Caco-2 (cell line): ENCODE measurements at regions of chr11 and their contacts with region 1.

Region 1: GRCh38 chr11:78645226-78646202 is 70.8 kb upstream of the NARS2 start:
- DNase-seq: peak; percentile 82 to 90
- H3K4me3 ChIP-seq: no peak overlapping the region
- H3K4me3 Mint-ChIP-seq: no peak overlapping the region
- H3K27ac Mint-ChIP-seq: no peak overlapping the region
- H3K4me1 ChIP-seq: no peaks in the 10 kb centered on the region
- H3K4me1 Mint-ChIP-seq: no peaks in the 10 kb centered on the region
- H3K27me3 ChIP-seq: no peaks in the 10 kb centered on the region
- H3K27me3 Mint-ChIP-seq: peaks cover 11% of the 10 kb centered on the region
- CTCF ChIP-seq: peak; percentile 98 to 99

Region 2: DNA sequence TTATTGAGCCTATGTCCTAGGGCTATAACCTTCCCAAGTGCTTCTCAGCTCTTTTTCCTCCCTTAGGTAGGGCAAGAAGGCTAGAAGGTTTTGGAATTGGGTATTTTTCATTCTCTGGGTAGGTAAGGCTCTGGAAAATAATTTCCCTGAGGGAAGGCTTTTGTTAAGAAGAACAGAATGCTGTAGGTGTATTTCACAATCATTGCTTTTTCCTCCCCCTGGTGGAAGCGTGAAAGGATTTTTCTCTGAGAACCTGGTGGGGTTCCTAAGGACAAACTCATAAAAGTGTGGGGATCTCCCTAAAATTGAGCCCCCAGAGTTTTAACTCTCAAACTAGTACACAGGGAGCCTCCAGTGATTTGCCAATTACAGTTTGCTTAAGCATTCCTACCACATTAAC is 29.8 kb before region 1 on chr11:
- CTCF ChIA-PET with region 1: no interaction called
- POLR2A ChIA-PET with region 1: no interaction called
- intact Hi-C with region 1: no loop called
- DNase-seq: peak in 1 of 2 experiments; percentile 25
- H3K4me3 ChIP-seq: no peak overlapping the region
- H3K4me3 Mint-ChIP-seq: no peak overlapping the region
- H3K27ac Mint-ChIP-seq: no peak overlapping the region
- H3K4me1 ChIP-seq: peaks cover 9% of the 10 kb centered on the region
- H3K4me1 Mint-ChIP-seq: peaks cover 14% of the 10 kb centered on the region
- H3K27me3 ChIP-seq: no peaks in the 10 kb centered on the region
- H3K27me3 Mint-ChIP-seq: no peaks in the 10 kb centered on the region
- CTCF ChIP-seq: peak; percentile 43

Region 3: DNA sequence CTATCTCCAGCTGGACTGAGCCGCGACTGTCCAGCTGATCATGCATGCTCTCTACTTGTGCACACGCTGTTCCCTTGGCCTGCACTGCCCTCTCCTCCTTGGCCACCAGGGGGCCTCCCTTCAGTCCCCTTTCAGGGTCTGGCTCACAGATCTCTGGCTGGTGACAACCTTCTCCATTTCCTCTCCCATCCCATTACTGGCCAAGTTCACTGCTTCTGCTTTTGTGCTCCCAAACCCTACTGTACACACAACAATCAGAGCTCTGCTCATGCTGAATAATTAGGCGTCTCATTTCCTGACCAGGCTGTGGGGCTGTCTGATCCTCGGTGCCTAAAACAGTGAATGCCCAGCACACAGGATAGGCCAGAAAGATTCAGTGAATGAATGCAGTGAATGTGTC is 153.1 kb after region 1 on chr11:
- CTCF ChIA-PET with region 1: interaction called, 14 read pairs
- POLR2A ChIA-PET with region 1: no interaction called
- intact Hi-C with region 1: loop called (anchors 1 kb)
- DNase-seq: peak; percentile 74 to 83
- H3K4me3 ChIP-seq: no peak overlapping the region
- H3K4me3 Mint-ChIP-seq: no peak overlapping the region
- H3K27ac Mint-ChIP-seq: no peak overlapping the region
- H3K4me1 ChIP-seq: peaks cover 8% of the 10 kb centered on the region; the same call in 1 of the 2 replicates
- H3K4me1 Mint-ChIP-seq: peaks cover 17% of the 10 kb centered on the region
- H3K27me3 ChIP-seq: no peaks in the 10 kb centered on the region
- H3K27me3 Mint-ChIP-seq: no peaks in the 10 kb centered on the region
- CTCF ChIP-seq: peak; percentile 99

Region 4: GRCh38 chr11:78916759-78917158 is 271.2 kb after region 1 on chr11:
- CTCF ChIA-PET with region 1: interaction called, 10 read pairs
- POLR2A ChIA-PET with region 1: no interaction called
- intact Hi-C with region 1: no loop called
- DNase-seq: no peak
- H3K4me3 ChIP-seq: no peak overlapping the region
- H3K4me3 Mint-ChIP-seq: no peak overlapping the region
- H3K27ac Mint-ChIP-seq: no peak overlapping the region
- H3K4me1 ChIP-seq: no peaks in the 10 kb centered on the region
- H3K4me1 Mint-ChIP-seq: no peaks in the 10 kb centered on the region
- H3K27me3 ChIP-seq: peaks cover 1% of the 10 kb centered on the region
- H3K27me3 Mint-ChIP-seq: peaks cover 23% of the 10 kb centered on the region
- CTCF ChIP-seq: no peak

Region 5: DNA sequence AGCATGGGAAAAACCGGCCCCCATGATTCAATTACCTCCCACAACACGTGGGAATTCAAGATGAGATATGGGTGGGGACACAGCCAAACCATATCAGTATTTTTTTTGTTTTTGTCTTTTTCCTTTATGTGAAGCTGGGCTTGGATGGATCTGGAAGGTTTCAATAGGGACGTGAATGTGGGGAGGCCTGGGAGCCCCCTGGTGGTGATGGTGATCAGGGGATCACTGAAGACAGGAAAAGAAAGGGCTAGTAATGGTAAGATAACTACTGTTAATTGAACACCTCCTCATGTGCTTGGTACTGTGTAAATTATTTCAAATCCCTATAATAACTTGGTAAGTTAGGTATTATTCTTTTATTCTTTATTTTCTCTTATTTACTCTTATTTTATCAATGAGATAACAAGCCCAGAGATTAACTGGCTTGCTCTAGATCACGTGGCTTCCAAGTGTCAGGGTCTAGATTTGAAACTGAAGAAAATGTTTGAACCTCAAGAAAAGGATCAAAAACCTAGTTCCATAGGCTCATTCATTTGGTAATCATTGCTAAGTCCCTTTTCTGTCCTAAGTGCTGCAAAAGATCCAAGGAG is 431.1 kb after region 1 on chr11:
- CTCF ChIA-PET with region 1: interaction called, 13 read pairs
- POLR2A ChIA-PET with region 1: no interaction called
- intact Hi-C with region 1: loop called (anchors 1 kb)
- DNase-seq: peak; percentile 60 to 77
- H3K4me3 ChIP-seq: no peak overlapping the region
- H3K4me3 Mint-ChIP-seq: no peak overlapping the region
- H3K27ac Mint-ChIP-seq: no peak overlapping the region
- H3K4me1 ChIP-seq: no peaks in the 10 kb centered on the region
- H3K4me1 Mint-ChIP-seq: no peaks in the 10 kb centered on the region
- H3K27me3 ChIP-seq: no peaks in the 10 kb centered on the region
- H3K27me3 Mint-ChIP-seq: no peaks in the 10 kb centered on the region
- CTCF ChIP-seq: peak; percentile 90 to 97

Region 6: GRCh38 chr11:79160791-79161403 is 515.4 kb after region 1 on chr11:
- CTCF ChIA-PET with region 1: interaction called, 5 read pairs
- POLR2A ChIA-PET with region 1: no interaction called
- intact Hi-C with region 1: loop called (anchors 1 kb)
- DNase-seq: peak in 1 of 2 experiments; percentile 43
- H3K4me3 ChIP-seq: no peak overlapping the region
- H3K4me3 Mint-ChIP-seq: no peak overlapping the region
- H3K27ac Mint-ChIP-seq: no peak overlapping the region
- H3K4me1 ChIP-seq: peaks cover 7% of the 10 kb centered on the region
- H3K4me1 Mint-ChIP-seq: peaks cover 12% of the 10 kb centered on the region
- H3K27me3 ChIP-seq: peaks cover 1% of the 10 kb centered on the region; the same call in 1 of the 2 replicates
- H3K27me3 Mint-ChIP-seq: peaks cover 10% of the 10 kb centered on the region
- CTCF ChIP-seq: peak; percentile 57 to 85